MCF 10A (cell line): ENCODE measurements at regions of chr5 and their contacts with region 1.

Region 1: DNA sequence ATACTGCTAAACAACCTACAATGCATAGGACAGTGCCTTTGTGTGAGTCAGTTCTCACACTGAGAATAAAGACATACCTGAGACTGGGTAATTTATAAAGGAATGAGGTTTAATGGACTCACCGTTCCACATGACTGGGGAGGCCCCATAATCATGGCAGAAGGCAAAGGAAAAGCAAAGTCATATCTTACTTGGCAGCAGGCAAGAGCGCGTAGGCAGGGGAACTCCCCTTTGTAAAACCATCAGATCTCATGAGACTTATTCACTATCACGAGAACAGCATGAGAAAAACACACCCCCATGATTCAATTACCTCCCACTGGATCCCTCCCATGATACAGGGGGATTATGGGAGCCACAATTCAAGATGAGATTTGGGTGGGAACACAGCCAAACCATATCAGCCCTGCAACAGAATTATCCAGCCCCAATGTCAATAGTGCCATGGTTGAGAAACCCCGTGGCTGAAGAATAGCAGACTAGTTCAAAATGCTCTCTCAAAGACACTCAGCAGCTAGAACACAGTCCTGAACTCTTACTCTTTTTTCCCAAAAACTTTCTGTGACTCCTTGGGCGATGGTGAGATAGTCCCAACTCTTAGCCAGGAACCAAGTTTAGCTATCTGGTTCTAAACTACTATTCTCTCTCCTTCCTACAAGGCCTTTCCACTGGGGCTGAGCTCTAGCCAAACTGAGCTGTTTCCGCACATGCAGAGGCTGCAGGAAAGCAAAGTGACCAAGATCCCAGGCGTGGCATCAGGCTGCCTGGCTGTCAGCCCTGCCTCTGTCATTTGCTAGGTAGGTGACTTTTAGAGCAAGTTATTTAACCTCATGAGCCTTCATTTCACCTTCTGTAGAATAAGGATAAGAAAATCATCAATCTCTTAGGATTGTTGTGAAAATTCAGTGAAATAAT is 21.7 kb downstream of the FAT2 start:
- DNase-seq: peak; percentile 42
- H3K4me3 Mint-ChIP-seq: no peak overlapping the region
- H3K27ac Mint-ChIP-seq: peak overlapping the region; percentile 57
- H3K4me1 Mint-ChIP-seq: peaks cover 54% of the 10 kb centered on the region
- H3K27me3 Mint-ChIP-seq: no peaks in the 10 kb centered on the region
- CTCF ChIP-seq: no peak

Region 2: DNA sequence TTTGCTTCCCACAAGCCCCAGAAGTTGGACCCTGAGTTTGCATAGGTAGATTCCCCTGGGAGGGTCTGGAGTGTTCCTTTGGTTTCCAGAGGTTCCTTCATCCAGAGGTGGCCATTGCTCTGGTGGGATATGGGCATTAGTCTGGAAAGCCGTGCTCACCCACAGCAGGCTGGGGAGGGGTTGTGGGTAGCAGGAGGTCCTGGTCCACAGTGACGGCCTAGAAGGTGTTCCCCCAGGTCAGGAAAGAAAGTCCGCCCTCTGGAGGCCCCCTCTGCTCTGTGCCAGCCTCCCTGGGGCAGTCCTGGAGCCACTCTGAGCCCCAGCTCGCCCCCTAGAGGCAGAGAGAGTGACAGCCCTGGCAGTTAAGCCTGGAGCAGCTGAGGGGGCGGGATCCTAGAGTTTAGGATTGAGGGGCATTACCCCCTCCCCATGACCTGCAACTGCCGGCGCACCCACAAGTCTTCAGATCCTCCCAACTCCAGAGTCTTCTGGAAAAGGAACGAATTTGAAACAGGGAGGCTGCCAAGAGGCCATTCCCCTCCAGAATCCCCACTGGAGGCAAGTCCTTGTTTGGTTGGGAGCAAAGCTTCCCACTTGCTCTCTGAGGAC is 1024.7 kb before region 1 on chr5:
- CTCF ChIA-PET with region 1: no interaction called
- POLR2A ChIA-PET with region 1: no interaction called
- intact Hi-C with region 1: no loop called
- DNase-seq: peak; percentile 91
- H3K4me3 Mint-ChIP-seq: no peak overlapping the region
- H3K27ac Mint-ChIP-seq: no peak overlapping the region
- H3K4me1 Mint-ChIP-seq: peaks cover 26% of the 10 kb centered on the region
- H3K27me3 Mint-ChIP-seq: no peaks in the 10 kb centered on the region
- CTCF ChIP-seq: peak; percentile 99

Region 3: GRCh38 chr5:151585970-151586369 is 16.6 kb after region 1 on chr5:
- CTCF ChIA-PET with region 1: interaction called, 41 read pairs
- POLR2A ChIA-PET with region 1: interaction called, 238 read pairs
- intact Hi-C with region 1: no loop called
- DNase-seq: peak; percentile 95
- H3K4me3 Mint-ChIP-seq: no peak overlapping the region
- H3K27ac Mint-ChIP-seq: peak overlapping the region; percentile 81
- H3K4me1 Mint-ChIP-seq: peaks cover 58% of the 10 kb centered on the region
- H3K27me3 Mint-ChIP-seq: no peaks in the 10 kb centered on the region
- CTCF ChIP-seq: no peak

Region 4: GRCh38 chr5:151598984-151599383 is 29.6 kb after region 1 on chr5:
- CTCF ChIA-PET with region 1: interaction called, 6 read pairs
- POLR2A ChIA-PET with region 1: interaction called, 14 read pairs
- intact Hi-C with region 1: no loop called
- DNase-seq: peak; percentile 70
- H3K4me3 Mint-ChIP-seq: no peak overlapping the region
- H3K27ac Mint-ChIP-seq: no peak overlapping the region
- H3K4me1 Mint-ChIP-seq: peaks cover 27% of the 10 kb centered on the region
- H3K27me3 Mint-ChIP-seq: no peaks in the 10 kb centered on the region
- CTCF ChIP-seq: no peak

Region 5: DNA sequence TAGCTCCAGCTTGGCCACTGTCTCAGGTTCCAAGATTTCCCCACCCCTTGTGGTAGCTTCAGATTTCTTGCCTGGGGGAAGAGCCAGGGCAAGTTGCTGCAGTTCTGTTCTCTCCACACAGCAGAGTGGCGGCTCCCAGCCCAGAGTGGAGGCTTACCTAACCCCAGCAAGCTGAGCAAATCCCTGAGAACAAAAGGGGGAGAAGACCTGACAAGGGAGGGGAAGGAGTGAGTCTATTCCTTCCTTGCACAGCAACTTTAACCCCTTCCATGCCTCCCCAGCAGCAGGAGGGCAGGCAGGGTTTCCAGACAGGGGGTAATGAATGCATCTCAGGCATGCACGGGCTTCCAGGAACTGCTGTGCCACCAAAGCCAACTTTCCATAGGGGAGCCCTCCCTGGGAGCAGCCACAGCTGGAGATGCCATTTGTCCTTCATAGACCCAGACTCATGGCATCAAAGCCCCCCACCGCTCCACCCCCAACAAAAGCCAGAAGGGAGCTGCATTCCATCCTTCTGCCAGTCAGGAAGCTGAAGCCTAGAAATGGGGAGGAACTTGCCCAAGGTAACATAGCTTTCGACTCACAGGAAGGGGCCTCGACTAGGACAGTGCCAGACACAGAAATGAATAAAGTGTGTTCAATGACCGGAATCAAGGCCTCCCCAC is 50.5 kb after region 1 on chr5:
- CTCF ChIA-PET with region 1: interaction called, 69 read pairs
- POLR2A ChIA-PET with region 1: interaction called, 304 read pairs
- intact Hi-C with region 1: loop called (anchors 5 kb)
- DNase-seq: peak; percentile 99
- H3K4me3 Mint-ChIP-seq: no peak overlapping the region
- H3K27ac Mint-ChIP-seq: peak overlapping the region; percentile 28
- H3K4me1 Mint-ChIP-seq: peaks cover 81% of the 10 kb centered on the region
- H3K27me3 Mint-ChIP-seq: no peaks in the 10 kb centered on the region
- CTCF ChIP-seq: no peak

Region 6: GRCh38 chr5:151637676-151638075 is 68.3 kb after region 1 on chr5:
- CTCF ChIA-PET with region 1: interaction called, 467 read pairs
- POLR2A ChIA-PET with region 1: interaction called, 91 read pairs
- intact Hi-C with region 1: no loop called
- DNase-seq: peak; percentile 66
- H3K4me3 Mint-ChIP-seq: no peak overlapping the region
- H3K27ac Mint-ChIP-seq: peak overlapping the region; percentile 14
- H3K4me1 Mint-ChIP-seq: peaks cover 34% of the 10 kb centered on the region
- H3K27me3 Mint-ChIP-seq: no peaks in the 10 kb centered on the region
- CTCF ChIP-seq: no peak